Right ventricle myocardium inferior (tissue), 1 donor: ENCODE measurements at regions of chr16 and their contacts with region 1.

Region 1: DNA sequence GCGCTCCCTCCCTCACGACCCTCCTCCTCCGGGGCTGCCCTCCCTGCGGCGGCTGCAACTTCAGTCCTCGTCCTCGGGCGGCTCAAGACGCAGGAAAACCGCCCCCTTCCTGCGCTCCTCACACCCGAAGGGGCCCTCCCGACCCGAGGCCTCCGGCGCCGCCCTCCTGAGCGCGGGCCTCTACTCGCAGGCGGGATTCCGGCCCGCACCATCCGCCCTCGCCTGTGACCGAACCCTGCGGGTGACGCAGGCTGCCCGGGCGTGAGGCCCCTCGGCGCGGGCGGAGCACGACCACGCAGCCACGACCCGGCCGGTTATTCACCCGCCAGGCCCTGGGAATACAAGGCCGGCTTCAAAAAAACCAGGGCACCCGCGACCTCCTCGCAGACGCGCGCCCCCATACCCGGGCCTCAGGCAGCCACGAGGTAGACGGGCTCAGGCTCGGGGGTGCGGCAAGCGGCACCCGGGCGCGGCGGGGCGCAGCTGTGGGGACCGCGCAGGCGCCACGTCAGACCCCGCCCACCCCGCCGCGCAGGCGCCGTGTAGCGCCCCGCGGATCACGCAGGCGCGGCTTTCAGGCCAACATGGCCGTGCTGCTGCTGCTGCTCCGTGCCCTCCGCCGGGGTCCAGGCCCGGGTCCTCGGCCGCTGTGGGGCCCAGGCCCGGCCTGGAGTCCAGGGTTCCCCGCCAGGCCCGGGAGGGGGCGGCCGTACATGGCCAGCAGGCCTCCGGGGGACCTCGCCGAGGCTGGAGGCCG is at the start of gene SPG7:
- DNase-seq: peak; percentile 92
- ATAC-seq: peak; percentile 94
- total RNA-seq, gene SPG7: 96.1 TPM

Region 2: GRCh38 chr16:89241187-89242007 is 266.6 kb before region 1 on chr16:
- intact Hi-C with region 1: loop called (anchors 10 kb)
- DNase-seq: peak; percentile 86
- ATAC-seq: peak; percentile 74

Region 3: GRCh38 chr16:89330177-89330856 is 177.7 kb before region 1 on chr16:
- intact Hi-C with region 1: loop called (anchors 5 kb)
- DNase-seq: no peak
- ATAC-seq: no peak

Region 4: DNA sequence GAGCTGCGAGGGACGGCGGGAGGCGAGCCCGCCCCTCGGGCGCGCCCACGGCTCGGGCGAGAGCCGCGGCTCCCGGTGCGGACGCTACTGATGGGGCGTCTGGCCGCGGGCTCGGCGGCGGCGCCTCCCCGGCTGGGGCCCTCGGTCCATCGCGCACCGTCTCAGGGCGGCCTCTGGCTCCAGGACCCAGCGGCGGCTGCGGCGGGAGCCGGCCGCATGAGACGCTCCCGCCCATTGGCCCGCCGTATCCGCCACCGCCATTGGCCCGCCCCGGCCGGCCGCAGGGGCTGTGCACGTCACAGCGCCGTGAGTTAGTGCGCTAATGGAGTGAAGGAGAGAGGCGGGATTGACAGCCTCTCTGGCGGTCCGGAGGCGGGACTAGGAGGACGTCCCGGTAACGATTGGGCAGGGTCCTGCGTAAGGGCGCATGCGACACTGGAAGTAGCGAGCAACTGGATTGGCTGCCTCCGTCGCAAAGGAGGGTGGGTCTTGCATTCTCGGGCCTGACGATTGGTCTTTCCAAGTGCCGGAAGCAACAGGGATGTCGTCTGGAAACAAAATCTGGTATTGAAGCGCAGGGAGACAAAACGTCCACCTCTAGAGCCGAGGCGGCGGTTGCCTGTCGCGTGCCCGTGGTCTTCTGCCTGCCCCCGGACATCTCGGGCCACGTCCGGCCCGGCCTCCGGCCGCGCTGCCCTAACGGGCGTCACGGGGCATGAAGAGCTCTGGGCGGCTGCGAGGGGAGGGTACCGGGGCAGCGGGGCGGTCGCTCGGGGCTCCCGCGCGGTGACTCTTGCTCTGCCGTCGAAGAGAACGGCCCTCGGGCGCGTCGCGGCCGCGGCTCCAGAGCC is 17.4 kb before region 1 on chr16 and contains the start of gene ANKRD11:
- intact Hi-C with region 1: loop called (anchors 1 kb)
- DNase-seq: peak; percentile 99
- ATAC-seq: peak; percentile 98
- total RNA-seq, gene ANKRD11: 64.9 TPM

Region 5: GRCh38 chr16:89560378-89561141 is 52.5 kb after region 1 on chr16 and contains the start of gene RPL13:
- intact Hi-C with region 1: loop called (anchors 5 kb)
- DNase-seq: peak; percentile 99
- ATAC-seq: peak; percentile 97
- total RNA-seq, gene RPL13: 1,162 TPM

Region 6: DNA sequence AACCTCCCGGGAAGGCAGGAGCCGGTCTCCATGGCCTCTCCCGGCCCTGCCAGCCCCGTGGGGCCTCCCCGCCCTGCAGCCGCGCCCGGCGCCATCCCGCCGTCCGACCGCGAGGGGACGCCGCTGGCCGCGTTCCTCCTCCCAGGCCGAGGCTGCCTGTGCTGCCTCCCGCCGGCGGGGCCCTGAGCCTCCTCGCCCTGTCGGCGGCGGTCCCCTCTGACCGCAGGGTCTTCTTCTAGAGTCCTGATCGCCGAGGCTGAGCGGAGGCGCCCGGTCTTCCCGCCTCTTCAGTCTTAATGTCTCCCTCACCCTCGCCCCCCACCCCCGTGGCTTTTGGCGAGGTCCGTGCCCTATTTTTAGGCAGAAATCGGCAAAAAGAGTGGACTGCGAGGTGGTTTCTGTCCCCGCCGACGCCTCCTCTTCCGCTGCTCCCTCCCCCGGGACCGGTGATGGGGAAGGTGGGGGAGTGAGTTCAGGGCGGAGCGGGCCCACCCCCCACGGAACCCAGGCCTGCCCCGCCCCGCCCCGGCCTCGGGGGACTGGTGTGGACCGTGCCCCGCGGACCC is 66.8 kb after region 1 on chr16:
- intact Hi-C with region 1: no loop called
- DNase-seq: no peak
- ATAC-seq: peak; percentile 51

Region 7: DNA sequence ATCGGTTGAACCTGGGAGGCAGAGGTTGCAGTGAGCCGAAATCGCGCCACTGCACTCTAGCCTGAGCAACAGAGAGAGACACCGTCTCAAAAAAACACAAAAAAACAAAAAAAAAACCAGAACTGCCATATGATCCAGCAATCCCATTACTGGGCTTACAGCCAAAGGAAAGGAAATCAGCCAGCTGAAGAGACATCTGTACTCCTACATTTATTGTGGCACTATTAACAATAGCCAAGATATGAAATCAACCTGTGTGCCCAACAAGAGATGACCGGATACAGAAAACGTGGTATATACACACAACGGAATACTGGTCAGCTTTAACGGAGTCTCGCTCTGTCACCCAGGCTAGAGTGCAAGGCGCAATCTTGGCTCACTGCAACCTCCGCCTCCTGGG is 293.8 kb after region 1 on chr16:
- intact Hi-C with region 1: no loop called
- DNase-seq: no peak
- ATAC-seq: no peak